Natural killer cell (primary cell): ENCODE measurements at regions of chr10 and their contacts with region 1.

Region 1: DNA sequence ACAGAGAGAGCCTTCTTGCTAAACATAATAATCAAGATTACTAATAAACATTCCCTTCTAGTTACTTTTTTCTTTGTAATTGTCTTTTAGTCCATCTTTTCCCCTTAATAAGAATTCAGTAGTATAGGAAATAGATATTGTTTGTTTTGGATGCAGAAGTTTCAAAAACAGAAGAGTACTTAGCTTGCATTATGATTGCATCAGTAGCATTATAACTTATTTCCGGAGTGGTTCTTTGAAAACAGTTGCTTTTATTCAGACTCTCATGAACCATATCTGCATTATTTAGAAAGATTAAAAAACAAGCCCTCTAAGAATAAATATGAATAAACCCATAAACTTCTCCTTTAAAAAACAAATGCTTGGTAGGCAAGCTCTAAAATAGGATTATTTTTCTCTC is 34.0 kb upstream of the DKK1 start:
- DNase-seq: no peak
- ATAC-seq: no peak
- H3K4me3 ChIP-seq: no peak overlapping the region
- H3K4me3 Mint-ChIP-seq: no peak overlapping the region
- H3K27ac ChIP-seq: no peak overlapping the region
- H3K27ac Mint-ChIP-seq: no peak overlapping the region
- H3K4me1 ChIP-seq: no peaks in the 10 kb centered on the region
- H3K4me1 Mint-ChIP-seq: no peaks in the 10 kb centered on the region
- H3K27me3 ChIP-seq: no peaks in the 10 kb centered on the region
- H3K27me3 Mint-ChIP-seq: no peaks in the 10 kb centered on the region
- CTCF ChIP-seq: no peak

Region 2: GRCh38 chr10:52221923-52222322 is 58.1 kb before region 1 on chr10:
- intact Hi-C with region 1: loop called (anchors 2 kb)
- DNase-seq: no peak
- ATAC-seq: no peak
- H3K4me3 ChIP-seq: no peak overlapping the region
- H3K4me3 Mint-ChIP-seq: no peak overlapping the region
- H3K27ac ChIP-seq: no peak overlapping the region
- H3K27ac Mint-ChIP-seq: no peak overlapping the region
- H3K4me1 ChIP-seq: no peaks in the 10 kb centered on the region
- H3K4me1 Mint-ChIP-seq: no peaks in the 10 kb centered on the region
- H3K27me3 ChIP-seq: no peaks in the 10 kb centered on the region
- H3K27me3 Mint-ChIP-seq: peaks cover 0 to 6% of the 10 kb centered on the region in 2 donors
- CTCF ChIP-seq: no peak